Dorsolateral prefrontal cortex (tissue), 120 donors: ENCODE measurements at regions of chr10 and their contacts with region 1.

Region 1: DNA sequence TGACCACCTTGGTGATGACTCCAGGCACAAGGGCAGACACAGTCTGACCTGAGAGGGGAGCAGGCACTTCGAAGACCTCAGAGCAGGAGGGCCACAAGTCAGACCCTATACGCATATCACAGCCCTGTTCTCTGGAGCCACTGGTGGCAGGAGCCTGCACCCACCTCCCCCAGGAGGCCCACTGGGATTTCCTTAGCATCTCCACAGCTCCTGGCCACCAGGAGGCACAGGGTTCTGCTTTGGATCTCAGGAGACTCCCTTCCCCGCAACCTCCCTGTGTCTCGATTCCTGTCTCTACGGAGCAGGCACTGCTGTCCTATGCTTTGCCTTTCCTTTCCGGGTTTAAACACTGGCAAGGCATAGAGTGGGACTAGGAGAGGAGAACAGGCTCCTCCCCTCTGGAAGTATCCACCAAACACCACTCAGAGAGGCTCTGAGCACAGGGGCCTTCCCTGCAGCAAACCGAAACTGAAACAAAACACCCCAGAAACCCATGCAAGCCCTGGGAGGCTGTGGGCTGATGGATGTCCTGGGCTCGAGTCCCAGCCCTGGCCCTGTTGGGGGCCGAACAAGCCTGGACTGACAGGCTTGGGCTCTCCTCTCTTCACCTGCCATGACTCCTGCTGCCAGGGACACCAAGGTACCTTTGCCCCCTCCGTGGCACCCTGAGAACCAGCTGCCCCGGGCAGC is 166.3 kb downstream of the NEURL1 start:
- DNase-seq: peak in 8 of 10 donors; percentile 53 to 78 (median 68)
- H3K4me3 ChIP-seq: peak overlapping the region; percentile 31 to 77 (median 59)
- H3K27ac ChIP-seq: peak overlapping the region; percentile 38 to 96 (median 90)
- H3K27me3 ChIP-seq: no peaks in the 10 kb centered on the region
- CTCF ChIP-seq: peak in 7 of 56 donors; percentile 5 to 33 (median 15)

Region 2: DNA sequence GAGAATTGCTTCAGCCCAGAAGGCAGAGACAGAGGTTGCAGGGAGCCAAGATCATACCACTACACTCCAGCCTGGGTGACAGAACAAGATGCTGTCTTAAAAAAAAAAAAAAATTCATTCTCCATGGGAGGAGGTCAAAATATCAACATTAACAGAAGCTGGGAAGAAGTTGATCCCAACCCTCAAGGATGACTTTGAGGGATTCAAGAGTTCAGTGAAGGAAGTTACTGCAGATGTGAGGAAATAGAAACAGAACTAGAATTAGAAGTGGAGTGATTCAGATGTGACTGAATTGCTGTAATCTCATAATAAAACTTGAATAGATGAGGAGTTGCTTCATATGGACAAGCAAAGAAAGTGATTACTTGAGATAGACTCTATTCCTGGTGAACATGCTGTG is 433.9 kb before region 1 on chr10:
- intact Hi-C with region 1: no loop called
- DNase-seq: no peak
- H3K4me3 ChIP-seq: no peak overlapping the region
- H3K27ac ChIP-seq: no peak overlapping the region
- H3K27me3 ChIP-seq: no peaks in the 10 kb centered on the region
- CTCF ChIP-seq: no peak

Region 3: DNA sequence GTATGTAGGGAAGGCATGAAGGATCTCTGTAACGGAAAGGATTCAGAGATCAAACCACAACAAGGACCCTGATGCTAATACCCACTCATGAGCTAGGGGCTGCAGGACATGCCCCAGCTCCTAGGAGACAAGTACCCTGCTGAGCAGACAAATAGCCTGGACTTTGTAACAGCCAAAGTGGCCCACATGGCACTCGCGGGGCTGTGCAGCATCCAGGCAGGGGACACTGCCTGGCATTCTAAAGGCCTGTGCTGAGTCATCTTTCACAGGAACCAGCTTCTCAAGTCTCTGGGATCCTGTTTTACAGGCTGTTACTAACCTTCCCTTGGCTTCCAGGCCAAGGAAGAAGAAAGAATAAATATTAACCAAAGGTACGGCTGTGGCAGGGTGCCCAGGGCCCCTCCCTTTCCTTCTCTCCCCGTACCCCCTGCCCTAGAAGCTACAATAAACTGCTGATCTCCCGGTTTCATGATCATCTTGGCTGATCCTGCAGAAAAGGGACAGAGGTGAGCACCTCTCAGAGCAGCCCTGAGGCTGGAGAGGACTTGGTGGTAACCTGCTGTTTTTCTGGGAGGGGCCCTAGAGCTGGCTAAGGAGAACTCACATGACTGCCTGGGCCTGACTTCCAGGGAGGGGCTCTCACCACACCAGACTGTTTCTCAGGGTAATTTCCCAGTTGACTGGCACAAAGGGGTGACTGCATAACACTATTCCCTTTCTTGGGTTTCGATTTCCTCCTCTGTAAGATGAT is 418.4 kb before region 1 on chr10:
- intact Hi-C with region 1: no loop called
- DNase-seq: peak in 5 of 10 donors; percentile 27 to 62 (median 44)
- H3K4me3 ChIP-seq: peak overlapping the region in 1 of 59 donors; percentile 10
- H3K27ac ChIP-seq: peak overlapping the region in 48 of 59 donors; percentile 8 to 82 (median 62)
- H3K27me3 ChIP-seq: no peaks in the 10 kb centered on the region
- CTCF ChIP-seq: no peak

Region 4: GRCh38 chr10:103618575-103619423 is 41.0 kb before region 1 on chr10:
- intact Hi-C with region 1: loop called (anchors 5 to 10 kb)
- DNase-seq: peak in 5 of 10 donors; percentile 45 to 76 (median 69)
- H3K4me3 ChIP-seq: peak overlapping the region in 1 of 59 donors; percentile 4
- H3K27ac ChIP-seq: peak overlapping the region in 58 of 59 donors; percentile 28 to 90 (median 82)
- H3K27me3 ChIP-seq: no peaks in the 10 kb centered on the region
- CTCF ChIP-seq: no peak

Region 5: DNA sequence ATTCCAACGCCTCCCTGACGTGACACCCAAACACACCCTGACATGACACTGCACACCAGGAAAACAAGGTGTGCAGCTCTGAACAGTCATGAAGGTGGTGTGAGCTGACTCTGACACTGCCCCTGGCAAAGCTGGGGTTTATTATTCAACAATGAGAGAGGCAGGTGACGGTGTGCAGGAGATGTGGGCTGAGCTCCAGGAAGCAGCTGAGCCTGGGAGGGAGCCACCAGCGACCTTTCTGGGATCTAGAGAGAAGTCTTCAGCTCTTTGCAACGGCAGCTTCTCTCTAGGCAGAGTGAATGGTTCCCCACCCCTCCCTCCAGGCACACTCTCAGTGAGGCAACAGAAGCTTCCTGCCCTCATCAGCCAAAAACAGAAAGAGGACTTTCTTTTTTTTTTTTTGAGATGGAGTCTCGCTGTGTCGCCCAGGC is 130.0 kb after region 1 on chr10:
- intact Hi-C with region 1: no loop called
- DNase-seq: peak in 1 of 10 donors; percentile 47
- H3K4me3 ChIP-seq: no peak overlapping the region
- H3K27ac ChIP-seq: no peak overlapping the region
- H3K27me3 ChIP-seq: no peaks in the 10 kb centered on the region
- CTCF ChIP-seq: no peak

Region 6: DNA sequence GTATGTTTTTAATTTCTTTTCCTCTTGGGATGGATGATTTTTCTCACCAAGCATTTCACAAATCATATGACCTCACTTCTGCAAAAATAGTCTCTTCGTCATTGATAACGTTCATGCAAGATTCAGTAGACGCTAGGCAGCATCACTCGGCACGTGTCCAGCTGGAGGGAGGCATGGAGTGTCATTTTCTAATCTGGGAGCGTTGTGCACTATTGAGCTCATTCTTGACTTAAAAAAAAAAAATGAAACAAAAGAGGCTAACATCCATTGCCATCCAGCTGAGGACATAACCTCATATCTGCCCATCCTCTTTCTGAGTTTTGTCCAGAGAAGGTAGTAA is 369.7 kb after region 1 on chr10:
- intact Hi-C with region 1: no loop called
- DNase-seq: peak; percentile 19 to 96 (median 86)
- H3K4me3 ChIP-seq: peak overlapping the region in 7 of 59 donors; percentile 4 to 23 (median 11)
- H3K27ac ChIP-seq: peak overlapping the region in 58 of 59 donors; percentile 16 to 93 (median 78)
- H3K27me3 ChIP-seq: no peaks in the 10 kb centered on the region
- CTCF ChIP-seq: peak in 6 of 56 donors; percentile 10 to 27 (median 15)